PC-9 (cell line): ENCODE measurements at regions of chr3 and their contacts with region 1.

Region 1: DNA sequence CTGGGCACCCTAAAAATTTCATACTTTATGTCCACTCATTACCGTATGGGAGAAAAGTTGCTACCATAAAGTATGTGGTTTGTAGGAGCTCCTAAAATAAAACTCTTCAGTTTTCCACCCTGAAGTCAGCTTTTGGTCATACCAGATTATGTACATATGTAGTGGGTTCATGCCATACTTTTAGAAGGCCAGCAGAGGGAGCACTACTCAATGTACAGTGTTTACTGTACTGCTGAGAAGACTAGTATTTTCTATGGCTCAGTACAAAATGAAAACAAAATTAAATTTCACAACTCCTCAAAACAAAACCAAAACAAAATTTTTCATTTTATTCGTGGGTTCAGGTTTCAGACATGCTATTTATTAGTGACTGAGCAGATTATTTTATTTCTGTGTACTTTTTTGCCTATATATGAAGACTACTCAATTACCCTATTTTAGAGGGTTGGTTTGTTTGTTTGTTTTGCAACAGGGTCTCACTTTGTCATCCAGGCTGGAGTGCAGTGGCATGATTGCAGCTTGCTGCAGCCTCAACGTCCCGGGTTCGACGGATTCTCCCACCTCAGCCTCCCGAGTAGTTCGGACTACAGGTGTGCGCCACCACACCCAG is 24.3 kb downstream of the NXPE3 start:
- DNase-seq: peak; percentile 24 to 68
- H3K4me3 ChIP-seq: no peak overlapping the region
- H3K27ac ChIP-seq: no peak overlapping the region
- H3K4me1 ChIP-seq: no peaks in the 10 kb centered on the region
- H3K27me3 ChIP-seq: no peaks in the 10 kb centered on the region
- CTCF ChIP-seq: peak; percentile 99

Region 2: DNA sequence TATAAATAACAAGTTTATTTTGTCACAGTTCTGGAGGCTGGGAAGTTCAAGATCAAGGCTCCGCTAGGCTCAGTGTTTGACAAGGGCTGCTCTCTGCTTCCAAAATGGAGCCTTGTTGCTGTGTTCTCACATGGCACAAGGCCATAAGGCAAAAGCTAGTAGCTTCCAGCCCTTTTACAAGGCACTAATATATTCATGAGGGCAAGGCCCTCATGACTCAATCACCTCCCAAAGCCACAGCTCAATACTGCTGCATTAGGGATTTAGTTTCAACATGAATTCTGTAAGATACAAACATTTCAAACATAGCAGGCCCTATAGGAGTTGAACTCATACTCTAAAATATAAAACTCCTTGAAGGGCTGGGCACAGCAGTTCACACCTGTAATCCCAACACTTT is 156.6 kb before region 1 on chr3:
- CTCF ChIA-PET with region 1: no interaction called
- POLR2A ChIA-PET with region 1: no interaction called
- intact Hi-C with region 1: no loop called
- DNase-seq: no peak
- H3K4me3 ChIP-seq: no peak overlapping the region
- H3K27ac ChIP-seq: no peak overlapping the region
- H3K4me1 ChIP-seq: peaks cover 16% of the 10 kb centered on the region
- H3K27me3 ChIP-seq: no peaks in the 10 kb centered on the region
- CTCF ChIP-seq: no peak

Region 3: DNA sequence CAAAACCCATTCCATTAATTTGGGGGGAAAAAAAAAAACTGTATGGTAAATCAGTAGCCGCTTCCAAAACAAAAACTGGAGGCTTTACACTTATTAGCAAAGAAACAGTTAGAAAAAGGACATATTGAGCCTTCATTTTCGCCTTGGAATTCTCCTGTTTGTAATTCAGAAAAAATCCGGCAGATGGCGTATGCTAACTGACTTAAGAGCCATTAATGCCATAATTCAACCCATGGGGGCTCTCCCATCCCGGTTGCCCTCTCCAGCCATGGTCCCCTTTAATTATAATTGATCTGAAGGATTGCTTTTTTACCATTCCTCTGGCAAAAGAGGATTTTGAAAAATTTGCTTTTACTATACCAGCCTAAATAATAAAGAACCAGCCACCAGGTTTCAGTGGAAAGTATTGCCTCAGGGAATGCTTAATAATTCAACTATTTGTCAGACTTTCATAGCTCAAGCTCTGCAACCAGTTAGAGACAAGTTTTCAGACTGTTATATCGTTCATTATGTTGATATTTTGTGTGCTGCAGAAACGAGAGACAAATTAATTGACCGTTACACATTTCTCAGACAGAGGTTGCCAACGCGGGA is 107.4 kb before region 1 on chr3:
- CTCF ChIA-PET with region 1: interaction called, 3 read pairs
- POLR2A ChIA-PET with region 1: no interaction called
- intact Hi-C with region 1: loop called (anchors 5 kb)
- DNase-seq: peak; percentile 47 to 67
- H3K4me3 ChIP-seq: no peak overlapping the region
- H3K27ac ChIP-seq: no peak overlapping the region
- H3K4me1 ChIP-seq: no peaks in the 10 kb centered on the region
- H3K27me3 ChIP-seq: no peaks in the 10 kb centered on the region
- CTCF ChIP-seq: peak; percentile 99

Region 4: DNA sequence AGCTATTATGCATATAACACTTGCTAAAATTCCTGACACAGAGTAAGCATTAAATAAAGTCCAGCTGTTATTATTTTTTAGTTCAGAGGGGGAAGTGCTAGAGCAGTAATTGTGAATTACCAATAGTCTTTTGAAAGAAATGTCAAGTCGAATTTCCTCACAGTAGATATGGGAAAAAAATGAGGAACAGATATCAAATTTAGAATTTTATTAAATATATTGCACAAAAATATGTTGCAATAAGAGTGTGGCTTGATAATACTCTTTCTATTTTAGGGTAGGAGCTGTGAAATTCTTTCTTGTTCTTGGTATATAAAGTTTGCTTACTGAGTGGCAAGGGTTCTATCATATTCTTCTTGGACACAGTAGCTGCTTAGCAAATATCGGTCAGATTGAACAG is 227.4 kb after region 1 on chr3:
- CTCF ChIA-PET with region 1: no interaction called
- POLR2A ChIA-PET with region 1: interaction called, 13 read pairs
- intact Hi-C with region 1: no loop called
- DNase-seq: no peak
- H3K4me3 ChIP-seq: no peak overlapping the region
- H3K27ac ChIP-seq: no peak overlapping the region
- H3K4me1 ChIP-seq: no peaks in the 10 kb centered on the region
- H3K27me3 ChIP-seq: no peaks in the 10 kb centered on the region
- CTCF ChIP-seq: no peak

Region 5: GRCh38 chr3:102057781-102058421 is 254.6 kb after region 1 on chr3:
- CTCF ChIA-PET with region 1: no interaction called
- POLR2A ChIA-PET with region 1: no interaction called
- intact Hi-C with region 1: no loop called
- DNase-seq: no peak
- H3K4me3 ChIP-seq: no peak overlapping the region
- H3K27ac ChIP-seq: no peak overlapping the region
- H3K4me1 ChIP-seq: peaks cover 8% of the 10 kb centered on the region
- H3K27me3 ChIP-seq: no peaks in the 10 kb centered on the region
- CTCF ChIP-seq: no peak

Region 6: GRCh38 chr3:102124301-102125158 is 321.3 kb after region 1 on chr3:
- CTCF ChIA-PET with region 1: interaction called, 10 read pairs
- POLR2A ChIA-PET with region 1: no interaction called
- intact Hi-C with region 1: no loop called
- DNase-seq: peak in 1 of 2 experiments; percentile 85
- H3K4me3 ChIP-seq: no peak overlapping the region
- H3K27ac ChIP-seq: peak overlapping the region; percentile 53
- H3K4me1 ChIP-seq: peaks cover 17% of the 10 kb centered on the region
- H3K27me3 ChIP-seq: no peaks in the 10 kb centered on the region
- CTCF ChIP-seq: no peak